ENCODE measurements at regions of chr11 and their contacts with region 1.

Region 1: DNA sequence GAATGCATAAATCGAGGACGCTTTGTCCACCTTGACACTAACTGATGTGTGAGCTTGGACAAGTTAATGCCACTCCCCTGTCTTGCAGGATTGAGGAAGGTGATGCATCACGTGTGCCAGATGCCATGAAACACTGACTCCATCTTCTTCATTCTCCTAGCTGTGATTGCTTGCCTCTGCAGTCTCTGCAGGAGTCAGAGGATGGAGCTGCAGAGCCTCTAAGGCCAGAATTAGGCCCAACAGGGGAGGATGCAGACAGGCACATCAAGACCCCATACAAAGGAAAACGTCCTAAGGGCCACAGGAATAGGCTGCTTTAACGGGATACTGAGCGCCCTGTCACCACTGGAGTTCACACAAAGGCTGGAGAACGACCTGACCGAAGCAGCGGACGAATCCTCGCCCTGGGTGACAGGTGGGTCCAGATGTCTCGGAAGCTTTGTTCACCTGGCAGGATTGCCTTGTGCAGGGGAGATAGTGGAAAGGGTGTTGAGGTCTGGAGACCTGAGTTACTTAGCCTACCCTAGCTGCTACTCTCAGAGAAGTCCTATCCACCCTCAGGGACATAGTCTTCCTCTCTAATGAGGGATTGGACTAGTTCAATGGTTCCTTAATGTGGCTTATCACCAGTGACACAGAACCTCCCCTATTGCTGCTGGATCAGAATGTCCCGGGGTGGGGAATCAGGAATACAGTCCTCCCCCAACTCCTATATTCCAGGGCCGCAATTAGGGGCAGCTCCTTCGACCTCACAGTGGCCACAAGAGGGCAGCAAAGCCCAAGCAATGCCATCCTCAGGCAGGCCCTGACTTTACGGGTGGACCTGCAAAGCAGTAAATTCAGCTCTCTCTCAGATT is 32.4 kb downstream of the DBX1 start:
- DNase-seq: peak; percentile 42
- H3K4me3 ChIP-seq: no peak overlapping the region
- H3K27ac ChIP-seq: no peak overlapping the region
- H3K4me1 ChIP-seq: peaks cover 14% of the 10 kb centered on the region
- H3K27me3 ChIP-seq: no peaks in the 10 kb centered on the region
- CTCF ChIP-seq: peak; percentile 88 to 91

Region 2: GRCh38 chr11:19553683-19554333 is 574.1 kb before region 1 on chr11:
- CTCF ChIA-PET with region 1: no interaction called
- dilution Hi-C with region 1: no loop called
- in situ Hi-C with region 1: loop called in 1 of 2 experiments (anchors 25 kb)
- intact Hi-C with region 1: loop called (anchors 1 kb)
- DNase-seq: peak; percentile 47
- H3K4me3 ChIP-seq: no peak overlapping the region
- H3K27ac ChIP-seq: no peak overlapping the region
- H3K4me1 ChIP-seq: no peaks in the 10 kb centered on the region
- H3K27me3 ChIP-seq: no peaks in the 10 kb centered on the region
- CTCF ChIP-seq: peak; percentile 79 to 89

Region 3: DNA sequence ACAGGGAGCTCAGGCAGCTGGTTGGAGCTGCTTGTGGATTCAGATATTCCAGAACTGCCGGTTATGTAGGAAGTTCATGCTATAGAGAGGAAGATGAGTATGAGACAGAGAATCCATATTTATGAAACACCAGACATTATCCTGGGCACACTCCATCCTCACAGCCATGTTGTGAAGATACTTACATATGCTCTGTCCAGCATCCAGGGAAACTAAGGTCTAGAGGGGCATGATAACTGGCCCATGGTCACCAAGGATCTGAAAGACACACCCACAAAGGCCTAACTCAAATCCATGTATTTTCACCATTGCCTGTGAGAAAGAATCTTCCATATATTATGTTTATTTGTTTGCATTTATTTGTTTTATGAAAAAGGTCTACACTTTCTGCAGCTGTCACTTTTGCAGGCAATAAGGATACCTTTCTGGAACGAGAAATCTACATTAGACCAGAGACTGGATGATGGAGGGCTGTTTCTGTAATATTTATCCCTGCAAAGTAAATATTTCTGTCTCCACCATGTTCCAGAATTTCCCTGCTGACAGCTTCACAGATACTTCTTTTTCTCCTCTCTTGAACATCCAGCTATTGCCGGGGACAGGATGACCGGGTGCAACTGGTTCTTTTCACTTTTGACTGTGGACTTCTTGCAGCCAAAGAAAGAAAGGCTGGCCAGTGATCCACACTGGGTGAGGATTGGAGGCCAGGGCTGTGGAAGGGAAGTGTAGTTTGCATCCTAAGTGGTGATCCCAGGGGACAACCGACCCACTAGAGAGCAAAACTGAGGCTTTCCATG is 561.1 kb before region 1 on chr11:
- CTCF ChIA-PET with region 1: no interaction called
- dilution Hi-C with region 1: no loop called
- in situ Hi-C with region 1: loop called (anchors 10 to 25 kb)
- intact Hi-C with region 1: loop called (anchors 2 kb)
- DNase-seq: no peak
- H3K4me3 ChIP-seq: no peak overlapping the region
- H3K27ac ChIP-seq: no peak overlapping the region
- H3K4me1 ChIP-seq: peaks cover 5% of the 10 kb centered on the region
- H3K27me3 ChIP-seq: no peaks in the 10 kb centered on the region
- CTCF ChIP-seq: no peak

Region 4: GRCh38 chr11:19903620-19904069 is 224.3 kb before region 1 on chr11:
- CTCF ChIA-PET with region 1: interaction called, 5 read pairs
- dilution Hi-C with region 1: no loop called
- in situ Hi-C with region 1: no loop called
- intact Hi-C with region 1: loop called (anchors 1 kb)
- DNase-seq: peak; percentile 58
- H3K4me3 ChIP-seq: no peak overlapping the region
- H3K27ac ChIP-seq: no peak overlapping the region
- H3K4me1 ChIP-seq: peaks cover 3% of the 10 kb centered on the region
- H3K27me3 ChIP-seq: no peaks in the 10 kb centered on the region
- CTCF ChIP-seq: peak; percentile 82

Region 5: GRCh38 chr11:19951558-19952115 is 176.3 kb before region 1 on chr11:
- CTCF ChIA-PET with region 1: interaction called, 9 read pairs
- dilution Hi-C with region 1: no loop called
- in situ Hi-C with region 1: loop called (anchors 5 to 25 kb)
- intact Hi-C with region 1: loop called (anchors 1 kb)
- DNase-seq: peak; percentile 62
- H3K4me3 ChIP-seq: no peak overlapping the region
- H3K27ac ChIP-seq: no peak overlapping the region
- H3K4me1 ChIP-seq: peaks cover 17% of the 10 kb centered on the region
- H3K27me3 ChIP-seq: no peaks in the 10 kb centered on the region
- CTCF ChIP-seq: peak; percentile 47 to 57

Region 6: DNA sequence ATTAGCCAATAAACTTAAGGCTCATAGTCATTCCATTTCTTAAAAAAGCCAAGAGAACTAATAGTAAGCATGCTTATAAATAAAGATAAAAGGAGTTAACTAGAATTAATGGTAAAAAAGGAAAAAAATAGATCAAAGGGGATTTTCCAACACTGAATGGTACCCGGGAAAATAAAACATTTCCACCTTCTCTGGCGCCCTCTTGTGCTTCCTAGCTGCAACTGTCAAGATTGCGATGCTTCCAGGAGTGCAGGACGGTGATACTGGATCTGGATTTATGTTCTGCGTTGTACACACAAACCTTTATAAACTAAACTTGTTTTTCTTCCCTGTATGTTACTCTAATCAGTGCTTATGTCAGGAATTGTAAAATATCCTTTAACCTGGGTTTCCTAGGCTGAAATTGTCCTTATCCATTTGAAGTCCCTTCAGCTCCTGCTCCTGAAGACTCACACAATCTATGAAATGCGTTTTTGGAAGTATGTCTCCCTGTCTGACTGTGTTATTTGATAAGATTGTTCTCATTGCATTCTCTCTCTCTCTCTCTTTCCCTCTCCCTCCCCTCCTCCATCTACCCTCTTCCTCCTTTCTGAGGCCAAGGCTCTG is 226.0 kb after region 1 on chr11:
- CTCF ChIA-PET with region 1: interaction called, 12 read pairs
- dilution Hi-C with region 1: no loop called
- in situ Hi-C with region 1: loop called in 1 of 2 experiments (anchors 5 kb)
- intact Hi-C with region 1: loop called (anchors 1 kb)
- DNase-seq: peak; percentile 26
- H3K4me3 ChIP-seq: no peak overlapping the region
- H3K27ac ChIP-seq: no peak overlapping the region
- H3K4me1 ChIP-seq: no peaks in the 10 kb centered on the region
- H3K27me3 ChIP-seq: no peaks in the 10 kb centered on the region
- CTCF ChIP-seq: peak; percentile 92 to 97

Region 7: GRCh38 chr11:20609727-20610707 is 482.1 kb after region 1 on chr11:
- CTCF ChIA-PET with region 1: no interaction called
- dilution Hi-C with region 1: no loop called
- in situ Hi-C with region 1: loop called (anchors 25 kb)
- intact Hi-C with region 1: loop called (anchors 5 kb)
- DNase-seq: peak; percentile 79
- H3K4me3 ChIP-seq: peak overlapping the region; percentile 2 to 19 (median 18)
- H3K27ac ChIP-seq: peak overlapping the region; percentile 28
- H3K4me1 ChIP-seq: peaks cover 22% of the 10 kb centered on the region
- H3K27me3 ChIP-seq: peaks cover 24% of the 10 kb centered on the region
- CTCF ChIP-seq: peak; percentile 85 to 98

Measured in mammary epithelial cell (primary cell).